AG04450 (cell line): ENCODE measurements at regions of chr21 and their contacts with region 1.

Region 1: DNA sequence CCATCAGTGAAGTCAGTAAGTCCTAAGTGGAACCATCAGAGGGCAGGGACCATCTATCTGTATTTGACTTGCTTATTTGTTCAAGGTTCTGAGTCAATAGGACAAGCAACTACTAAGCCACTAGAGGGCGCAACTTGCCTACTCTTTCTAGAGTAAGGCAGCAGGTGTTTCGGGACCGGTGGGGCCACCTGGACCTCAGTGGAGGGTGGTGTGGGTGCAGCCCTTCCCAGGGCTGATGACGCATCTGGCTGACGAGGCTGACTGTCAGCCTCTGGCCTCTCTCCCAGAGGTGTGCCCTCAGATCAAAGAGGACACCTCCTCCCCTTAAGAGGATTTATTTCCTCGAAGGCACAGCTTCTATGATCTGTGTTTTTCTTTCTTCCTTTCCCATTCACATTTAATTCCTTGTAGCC is 6.6 kb downstream of the CBR3 start:
- DNase-seq: peak; percentile 72
- H3K4me3 ChIP-seq: no peak overlapping the region
- H3K27ac ChIP-seq: no peak overlapping the region
- H3K27me3 ChIP-seq: no peaks in the 10 kb centered on the region
- CTCF ChIP-seq: peak; percentile 86

Region 2: GRCh38 chr21:36330904-36331303 is 189.4 kb after region 1 on chr21:
- CTCF ChIA-PET with region 1: interaction called, 12 read pairs
- POLR2A ChIA-PET with region 1: no interaction called
- DNase-seq: no peak
- H3K4me3 ChIP-seq: no peak overlapping the region
- H3K27ac ChIP-seq: no peak overlapping the region
- H3K27me3 ChIP-seq: no peaks in the 10 kb centered on the region
- CTCF ChIP-seq: peak; percentile 76

Region 3: GRCh38 chr21:36429947-36430546 is 288.5 kb after region 1 on chr21:
- CTCF ChIA-PET with region 1: no interaction called
- POLR2A ChIA-PET with region 1: no interaction called
- DNase-seq: peak; percentile 97
- H3K4me3 ChIP-seq: peak overlapping the region; percentile 47
- H3K27ac ChIP-seq: peak overlapping the region; percentile 93
- H3K27me3 ChIP-seq: no peaks in the 10 kb centered on the region
- CTCF ChIP-seq: 0 out of 2 replicates have a peak, but pooled peaks have one; percentile 7